ENCODE measurements at regions of chr5 and their contacts with region 1.

Region 1: DNA sequence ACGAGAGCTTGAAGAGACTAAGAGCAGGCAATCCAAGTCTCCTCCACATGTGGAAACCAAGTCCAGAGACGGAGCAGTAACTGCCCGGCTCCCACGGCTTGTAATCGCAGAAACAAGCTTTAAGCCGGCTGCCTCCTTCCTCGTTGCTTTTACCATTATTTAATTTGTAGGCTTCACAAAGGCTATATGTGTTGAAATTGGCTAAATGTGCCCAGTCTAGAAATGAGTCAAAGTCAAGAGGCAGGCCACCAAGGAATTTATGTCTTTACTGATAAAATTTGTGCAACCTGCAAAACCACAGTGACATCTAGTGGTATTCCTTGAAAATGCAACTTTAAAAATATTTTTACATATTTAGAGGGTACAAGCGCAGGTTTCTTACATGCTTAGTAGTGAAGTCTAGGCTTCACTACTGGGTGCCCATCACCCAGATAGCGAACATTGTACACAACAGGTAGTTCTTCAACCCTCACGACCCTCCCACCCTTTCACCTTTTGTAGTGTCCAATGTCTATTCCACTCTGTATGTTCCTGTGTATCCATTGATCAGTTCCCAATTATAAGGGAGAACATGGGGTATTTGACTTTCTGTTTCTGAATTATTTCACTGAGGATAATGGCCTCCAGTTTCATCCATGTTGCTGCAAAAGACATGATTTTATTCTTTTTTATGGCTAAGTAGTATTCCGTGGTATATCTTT is 33.5 kb upstream of the EBF1 start:
- DNase-seq: peak; percentile 59

Region 2: DNA sequence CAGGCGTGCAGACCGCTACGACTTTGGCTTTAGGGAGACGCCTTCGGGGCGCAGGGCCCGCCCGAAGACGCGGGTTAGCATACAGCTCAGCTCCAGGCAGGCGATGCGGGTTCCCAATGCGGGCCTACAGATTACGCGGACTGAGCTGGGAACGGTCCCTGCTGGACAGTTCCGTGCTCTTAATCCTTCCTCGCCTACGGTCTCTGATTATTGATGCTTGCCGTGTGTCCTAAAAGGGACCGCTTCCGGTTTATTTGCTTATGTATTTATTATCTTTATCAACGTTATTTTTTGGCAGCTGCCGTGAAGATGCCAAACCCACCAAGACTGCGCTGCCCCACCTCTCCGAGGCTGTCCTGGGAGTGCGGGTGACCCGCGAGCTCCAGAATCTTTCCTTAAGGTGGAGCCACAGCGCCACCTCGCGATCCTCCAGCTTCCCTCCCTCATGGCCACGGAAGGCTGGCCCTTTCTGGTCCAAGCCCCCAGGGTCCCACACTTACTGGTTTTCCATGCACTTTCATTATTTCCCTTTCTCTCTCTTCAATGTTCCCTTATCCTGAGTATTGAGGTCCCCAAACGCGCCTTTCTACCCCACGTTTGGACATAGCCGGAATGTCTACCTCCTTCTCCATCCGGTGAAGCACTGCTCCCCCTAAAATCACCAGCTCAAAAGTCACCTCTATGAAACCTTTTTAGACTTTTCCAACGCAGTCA is 26.5 kb before region 1 on chr5:
- CTCF ChIA-PET with region 1: interaction called, 14 read pairs
- POLR2A ChIA-PET with region 1: no interaction called
- DNase-seq: peak; percentile 80